HEK293 (cell line): ENCODE measurements at regions of chr14 and their contacts with region 1.

Region 1: DNA sequence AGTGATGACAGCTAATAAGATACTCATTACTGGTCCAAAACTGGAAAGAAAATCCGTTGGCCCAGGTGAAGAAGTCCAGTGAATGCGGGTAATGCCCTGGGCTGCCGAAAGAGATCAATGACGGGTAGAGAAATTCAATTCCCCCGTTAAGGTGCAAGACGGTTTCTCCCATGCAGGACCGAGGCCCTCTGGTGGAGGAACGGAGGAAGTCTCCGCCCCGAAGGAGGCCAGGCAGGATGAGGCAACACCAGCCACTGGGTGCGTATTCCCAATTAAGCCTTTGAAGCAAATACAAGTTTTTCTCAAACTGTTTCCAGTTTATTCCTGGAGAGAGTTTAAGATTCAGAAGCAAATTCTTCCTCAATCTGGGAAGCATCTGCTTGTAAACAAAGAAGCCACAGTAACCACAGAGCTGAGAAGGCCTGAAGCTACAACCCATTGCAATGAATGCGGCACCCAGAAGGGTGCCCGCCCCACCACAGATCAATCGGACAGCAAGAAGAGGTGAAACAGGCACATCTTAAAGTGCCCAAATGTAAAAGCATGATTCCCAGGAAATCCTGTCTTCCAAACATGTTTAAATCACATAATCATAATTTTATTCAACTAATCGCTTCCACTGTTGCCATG is 118.5 kb downstream of the TTC7B start:
- H3K4me3 ChIP-seq: no peak overlapping the region
- H3K27ac ChIP-seq: no peak overlapping the region
- H3K4me1 ChIP-seq: peaks cover 12% of the 10 kb centered on the region
- CTCF ChIP-seq: peak; percentile 90

Region 2: DNA sequence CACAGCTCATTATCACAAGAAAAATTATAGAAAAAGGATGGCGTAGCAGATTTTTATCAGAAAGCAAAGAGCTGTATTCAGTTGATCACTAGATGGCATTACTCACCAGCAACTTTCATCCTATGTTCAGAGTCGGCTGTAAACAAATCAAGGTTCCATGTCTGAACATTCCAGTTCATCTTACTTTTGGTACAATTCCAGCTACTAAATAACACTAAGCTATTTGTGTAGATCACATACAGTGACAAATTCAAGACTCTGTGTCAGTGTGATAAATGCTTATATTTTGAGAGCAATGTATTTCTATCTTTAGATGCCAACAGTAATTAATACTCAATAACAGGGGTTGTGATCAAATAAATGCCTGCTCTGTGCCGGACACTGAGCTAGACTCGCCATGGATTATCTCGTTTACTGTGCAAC is 396.0 kb before region 1 on chr14:
- CTCF ChIA-PET with region 1: interaction called, 28 read pairs
- POLR2A ChIA-PET with region 1: no interaction called
- H3K4me3 ChIP-seq: no peak overlapping the region
- H3K27ac ChIP-seq: no peak overlapping the region
- H3K4me1 ChIP-seq: no peaks in the 10 kb centered on the region
- CTCF ChIP-seq: no peak

Region 3: DNA sequence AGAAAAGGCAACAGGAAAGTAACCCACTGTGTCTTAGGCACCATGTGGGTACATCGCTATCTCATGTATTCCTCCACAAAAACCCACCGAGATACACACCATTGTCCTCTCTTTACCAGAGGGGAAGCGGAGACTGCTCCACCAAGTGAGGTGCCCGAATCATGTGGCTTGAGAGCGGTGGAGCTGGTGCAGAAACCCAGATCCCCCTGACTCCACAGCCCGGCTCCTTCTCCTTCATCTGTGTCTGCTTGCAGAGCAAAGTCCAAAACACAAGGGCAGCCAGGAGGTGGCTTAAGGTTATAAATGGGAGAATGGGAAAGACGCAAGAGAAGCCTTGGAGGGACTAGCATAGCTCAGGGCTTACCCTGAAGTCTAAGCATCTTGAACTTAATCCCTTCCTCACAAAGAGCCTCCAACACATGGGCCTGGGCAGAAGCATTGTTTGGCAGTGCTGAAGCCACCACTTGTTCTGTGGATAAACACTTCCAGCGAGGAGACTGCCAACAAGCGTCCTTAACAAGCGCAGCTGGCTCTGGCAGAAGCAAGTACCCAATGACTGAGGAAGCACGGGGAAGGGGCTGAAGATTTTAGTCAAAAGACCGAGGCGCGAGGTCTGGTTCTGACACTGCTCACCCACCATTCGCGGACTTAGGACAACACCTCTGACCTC is 35.6 kb after region 1 on chr14:
- CTCF ChIA-PET with region 1: no interaction called
- POLR2A ChIA-PET with region 1: no interaction called
- H3K4me3 ChIP-seq: no peak overlapping the region
- H3K27ac ChIP-seq: no peak overlapping the region
- H3K4me1 ChIP-seq: no peaks in the 10 kb centered on the region
- CTCF ChIP-seq: no peak